Activated T-helper 2 cell treated with anti-CD3 and anti-CD28 coated beads, Interferon-gamma antibody, Interleukin-2, Interleukin-4, amounts not matched to agents 10 μg/mL and 5 μg/mL and 100 μg/mL, durations not matched to agents 14 hours and 24 hours and 36 hours (primary cell): ENCODE measurements at regions of chr19 and their contacts with region 1.

Region 1: GRCh38 chr19:49817964-49818648 is at the start of gene MED25:
- DNase-seq: peak; percentile 89
- H3K4me3 Mint-ChIP-seq: peak within 1 kb of the TSS; percentile 93
- H3K27ac Mint-ChIP-seq: peak within 1 kb of the TSS; percentile 93
- H3K4me1 Mint-ChIP-seq: peaks cover 12% of the 10 kb centered on the region
- H3K27me3 Mint-ChIP-seq: no peaks in the 10 kb centered on the region
- total RNA-seq, gene MED25: 44.0 and 49.6 TPM in 2 replicates

Region 2: DNA sequence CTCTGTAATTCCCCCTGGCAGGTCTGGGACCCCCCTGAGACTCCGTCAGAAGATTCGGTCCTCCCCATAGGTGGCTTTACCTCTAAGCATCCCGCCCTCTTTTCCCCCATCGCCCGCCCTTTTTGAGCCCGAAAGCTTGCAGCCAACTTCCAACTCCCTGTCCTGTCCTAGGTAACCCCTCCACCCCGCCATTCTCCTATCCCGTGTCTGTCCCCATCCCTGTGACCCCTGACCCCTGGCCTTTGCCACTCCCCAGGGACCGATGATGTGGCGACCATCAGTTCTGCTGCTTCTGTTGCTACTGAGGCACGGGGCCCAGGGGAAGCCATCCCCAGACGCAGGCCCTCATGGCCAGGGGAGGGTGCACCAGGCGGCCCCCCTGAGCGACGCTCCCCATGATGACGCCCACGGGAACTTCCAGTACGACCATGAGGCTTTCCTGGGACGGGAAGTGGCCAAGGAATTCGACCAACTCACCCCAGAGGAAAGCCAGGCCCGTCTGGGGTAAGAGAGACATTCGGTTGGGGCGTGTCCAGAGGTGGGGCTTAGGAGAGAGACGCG is 289.8 kb before region 1 on chr19:
- intact Hi-C with region 1: no loop called
- DNase-seq: no peak
- H3K4me3 Mint-ChIP-seq: peak overlapping the region; percentile 42
- H3K27ac Mint-ChIP-seq: peak overlapping the region; percentile 33
- H3K4me1 Mint-ChIP-seq: peaks cover 14% of the 10 kb centered on the region
- H3K27me3 Mint-ChIP-seq: peaks cover 4% of the 10 kb centered on the region

Region 3: DNA sequence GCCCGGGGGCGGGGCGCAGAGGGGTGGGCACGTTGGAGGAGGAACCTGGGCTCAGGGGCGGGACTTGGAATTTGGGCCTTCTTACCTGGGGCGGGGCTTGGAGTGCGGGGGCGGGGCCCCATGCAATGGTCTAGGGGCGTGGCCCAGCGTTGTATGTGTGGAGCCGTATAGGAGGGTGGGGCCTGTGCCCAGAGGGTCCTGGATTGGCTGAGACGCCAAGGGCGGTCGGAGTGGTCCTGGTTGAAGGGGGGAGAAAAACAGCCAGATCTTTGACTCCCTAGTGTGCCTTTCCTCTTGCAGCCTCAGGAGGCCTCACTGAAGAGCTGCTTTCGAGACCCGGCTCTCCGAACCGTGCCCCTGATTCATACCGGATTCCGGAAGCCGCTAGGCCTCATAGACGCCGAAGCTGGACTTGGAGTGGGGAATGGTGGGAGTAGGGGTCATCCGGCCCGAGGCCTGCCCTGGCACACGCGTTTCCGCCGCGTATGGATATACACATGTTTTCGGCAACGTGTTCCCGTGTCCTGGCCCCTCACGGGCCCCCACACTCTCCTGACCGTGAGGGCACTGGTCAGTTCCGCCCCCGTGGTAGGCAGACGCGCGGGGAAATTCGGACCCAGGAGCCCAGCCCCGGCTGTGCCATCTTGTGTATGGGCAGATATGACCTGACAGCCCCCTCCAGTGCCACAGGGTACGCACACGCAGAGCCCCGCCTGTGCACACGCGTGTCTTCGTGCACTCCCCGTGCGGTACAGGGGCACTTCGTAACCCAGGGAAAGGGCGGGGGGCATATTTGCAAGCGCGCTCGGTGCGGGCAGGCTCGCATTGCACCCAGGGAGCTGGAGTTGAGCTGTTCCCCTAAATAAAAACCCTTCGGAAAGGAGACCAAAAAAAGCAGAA is 227.8 kb before region 1 on chr19:
- intact Hi-C with region 1: loop called (anchors 5 kb)
- DNase-seq: peak; percentile 94
- H3K4me3 Mint-ChIP-seq: peak overlapping the region; percentile 83
- H3K27ac Mint-ChIP-seq: peak overlapping the region; percentile 82
- H3K4me1 Mint-ChIP-seq: peaks cover 22% of the 10 kb centered on the region
- H3K27me3 Mint-ChIP-seq: peaks cover 7% of the 10 kb centered on the region

Region 4: DNA sequence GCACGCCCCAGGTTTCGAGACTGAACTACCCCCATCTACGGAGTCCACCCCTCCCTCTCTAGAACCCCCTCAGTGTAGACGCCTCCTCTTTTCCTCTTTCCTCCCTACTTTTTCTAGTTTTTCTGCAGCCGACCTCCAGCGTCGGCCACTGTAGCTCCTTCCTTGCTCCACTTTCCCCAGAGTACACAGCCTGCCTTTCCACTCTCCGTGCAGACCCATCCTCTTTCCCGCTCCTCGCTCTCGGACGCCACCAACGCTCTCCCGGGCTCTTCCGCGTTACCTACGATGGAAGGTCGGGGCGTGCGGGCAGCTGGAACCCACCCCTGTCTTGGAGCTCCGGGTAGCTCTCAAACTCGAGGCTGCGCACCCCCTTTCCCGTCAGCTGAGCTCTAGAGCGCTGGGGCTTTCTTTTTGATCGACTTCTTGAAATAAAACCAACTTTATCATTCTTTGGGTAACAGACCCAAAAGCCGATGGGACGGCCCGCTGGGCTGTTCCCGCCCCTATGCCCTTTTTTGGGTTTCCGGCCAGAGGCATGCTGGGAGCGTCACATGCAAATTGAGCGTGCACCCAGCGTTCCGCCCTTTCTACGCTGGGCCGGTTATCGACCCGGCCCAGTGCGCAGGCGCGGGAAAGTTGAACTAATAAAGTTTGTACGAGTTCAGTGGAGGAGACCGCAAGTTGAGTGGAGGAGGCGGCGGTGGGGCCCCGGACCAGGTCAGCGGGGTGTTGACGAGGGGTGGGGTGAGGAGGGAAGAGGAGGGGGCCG is 152.6 kb before region 1 on chr19 and contains the starts of genes BCL2L12 and IRF3:
- intact Hi-C with region 1: loop called (anchors 10 kb)
- DNase-seq: peak; percentile 98
- H3K4me3 Mint-ChIP-seq: peak within 1 kb of the TSS; percentile 95
- H3K27ac Mint-ChIP-seq: peak within 1 kb of the TSS; percentile 87
- H3K4me1 Mint-ChIP-seq: peaks cover 20% of the 10 kb centered on the region
- H3K27me3 Mint-ChIP-seq: no peaks in the 10 kb centered on the region
- total RNA-seq, gene BCL2L12: 66.2 and 72.7 TPM in 2 replicates
- total RNA-seq, gene IRF3: 135 and 147 TPM in 2 replicates

Region 5: GRCh38 chr19:49766007-49766937 is 51.8 kb before region 1 on chr19:
- intact Hi-C with region 1: loop called (anchors 2 kb)
- DNase-seq: peak; percentile 99
- H3K4me3 Mint-ChIP-seq: peak overlapping the region; percentile 91
- H3K27ac Mint-ChIP-seq: peak overlapping the region; percentile 89
- H3K4me1 Mint-ChIP-seq: peaks cover 18% of the 10 kb centered on the region
- H3K27me3 Mint-ChIP-seq: no peaks in the 10 kb centered on the region

Region 6: DNA sequence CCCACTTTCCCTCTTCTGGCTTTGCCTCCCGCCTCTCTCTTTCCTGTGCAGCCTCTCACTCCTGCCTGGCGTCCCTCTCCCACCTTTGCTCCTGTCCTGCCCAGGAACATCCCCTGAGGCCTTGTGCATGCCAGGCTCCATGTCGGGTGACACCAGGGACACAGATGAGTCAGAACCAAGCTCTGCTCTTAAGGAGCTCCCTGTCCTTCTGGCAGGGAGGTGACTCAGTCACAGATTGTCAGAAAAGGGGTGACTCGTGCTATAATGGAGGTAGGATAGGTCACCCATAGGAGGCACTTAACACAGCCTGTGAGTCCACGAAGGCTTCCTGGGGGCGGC is 24.7 kb before region 1 on chr19:
- intact Hi-C with region 1: no loop called
- DNase-seq: no peak
- H3K4me3 Mint-ChIP-seq: no peak overlapping the region
- H3K27ac Mint-ChIP-seq: peak overlapping the region; percentile 91
- H3K4me1 Mint-ChIP-seq: peaks cover 4% of the 10 kb centered on the region
- H3K27me3 Mint-ChIP-seq: no peaks in the 10 kb centered on the region